H1 (cell line): ENCODE measurements at regions of chr20 and their contacts with region 1.

Region 1: GRCh38 chr20:36808317-36809257 is 35.0 kb upstream of the DSN1 start:
- DNase-seq: peak; percentile 29 to 93
- H3K4me3 ChIP-seq: no peak overlapping the region
- H3K27ac ChIP-seq: no peak overlapping the region
- H3K4me1 ChIP-seq: no peaks in the 10 kb centered on the region
- H3K27me3 ChIP-seq: no peaks in the 10 kb centered on the region
- CTCF ChIP-seq: peak; percentile 82 to 84 (median 83)
- EP300 ChIP-seq: no peak
- POLR2A ChIP-seq: no peak
- RAD21 ChIP-seq: peak; percentile 50 to 63; a peak in 3 of 4 replicates

Region 2: DNA sequence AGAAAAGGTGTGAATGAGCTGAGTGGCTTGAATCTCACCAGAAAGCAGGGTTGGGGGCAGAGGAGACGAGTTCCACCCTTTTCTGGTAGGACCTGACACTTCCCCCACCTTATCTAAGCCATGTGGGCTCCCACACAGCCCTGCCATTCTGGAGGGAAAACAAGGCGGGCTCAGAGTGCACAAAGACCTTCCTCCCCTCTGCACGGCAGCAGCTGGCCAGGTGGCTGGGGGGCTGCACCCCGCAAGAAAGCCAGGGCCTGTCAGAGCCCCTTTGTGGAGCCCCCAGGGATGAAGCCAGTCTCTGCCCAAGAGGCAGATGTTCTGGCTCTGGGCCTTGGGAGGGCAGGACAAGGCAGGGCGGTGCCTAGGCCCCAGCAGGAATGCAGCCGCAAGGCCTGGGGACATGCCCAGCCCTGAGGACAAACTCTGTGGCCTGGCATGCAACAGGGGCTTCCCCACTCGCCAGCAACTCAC is 13.4 kb after region 1 on chr20:
- CTCF ChIA-PET with region 1: interaction called, 13 read pairs
- POLR2A ChIA-PET with region 1: no interaction called
- DNase-seq: no peak
- H3K4me3 ChIP-seq: no peak overlapping the region
- H3K27ac ChIP-seq: no peak overlapping the region
- H3K4me1 ChIP-seq: peaks cover 3 to 10% (median 6%) of the 10 kb centered on the region in 4 experiments; a peak in 5 of 7 replicates
- H3K27me3 ChIP-seq: no peaks in the 10 kb centered on the region
- CTCF ChIP-seq: no peak
- EP300 ChIP-seq: no peak
- POLR2A ChIP-seq: no peak
- RAD21 ChIP-seq: no peak

Region 3: GRCh38 chr20:36835453-36836198 is 27.0 kb after region 1 on chr20:
- CTCF ChIA-PET with region 1: interaction called, 27 read pairs
- POLR2A ChIA-PET with region 1: no interaction called
- DNase-seq: peak; percentile 76 to 87
- H3K4me3 ChIP-seq: peak overlapping the region; percentile 1 to 52 (median 18); a peak in 4 of 8 replicates
- H3K27ac ChIP-seq: peak overlapping the region; percentile 52; the same call in 1 of the 2 replicates
- H3K4me1 ChIP-seq: peaks cover 0 to 7% (median 4%) of the 10 kb centered on the region in 4 experiments; a peak in 4 of 7 replicates
- H3K27me3 ChIP-seq: no peaks in the 10 kb centered on the region
- CTCF ChIP-seq: no peak
- EP300 ChIP-seq: no peak
- POLR2A ChIP-seq: peak in 1 of 2 experiments; percentile 82; a peak in 2 of 3 replicates
- RAD21 ChIP-seq: no peak

Region 4: GRCh38 chr20:36856691-36857635 is 48.4 kb after region 1 on chr20:
- CTCF ChIA-PET with region 1: interaction called, 16 read pairs
- POLR2A ChIA-PET with region 1: no interaction called
- DNase-seq: no peak
- H3K4me3 ChIP-seq: no peak overlapping the region
- H3K27ac ChIP-seq: no peak overlapping the region
- H3K4me1 ChIP-seq: peaks cover 0 to 21% (median 16%) of the 10 kb centered on the region in 4 experiments; a peak in 6 of 7 replicates
- H3K27me3 ChIP-seq: peaks cover 0 to 3% (median 1%) of the 10 kb centered on the region in 4 experiments; a peak in 3 of 7 replicates
- CTCF ChIP-seq: no peak
- EP300 ChIP-seq: no peak
- POLR2A ChIP-seq: no peak
- RAD21 ChIP-seq: no peak